Activated CD4-positive, alpha-beta T cell treated with anti-CD3 and anti-CD28 coated beads for 36 hours (primary cell): ENCODE measurements at regions of chr17 and their contacts with region 1.

Region 1: GRCh38 chr17:80892019-80892855 is 99.4 kb upstream of the CHMP6 start:
- DNase-seq: peak; percentile 94
- ATAC-seq: peak; percentile 78
- H3K4me3 Mint-ChIP-seq: peak overlapping the region; percentile 72
- H3K27ac Mint-ChIP-seq: peak overlapping the region; percentile 97
- H3K4me1 Mint-ChIP-seq: peaks cover 73% of the 10 kb centered on the region
- H3K27me3 Mint-ChIP-seq: no peaks in the 10 kb centered on the region

Region 2: DNA sequence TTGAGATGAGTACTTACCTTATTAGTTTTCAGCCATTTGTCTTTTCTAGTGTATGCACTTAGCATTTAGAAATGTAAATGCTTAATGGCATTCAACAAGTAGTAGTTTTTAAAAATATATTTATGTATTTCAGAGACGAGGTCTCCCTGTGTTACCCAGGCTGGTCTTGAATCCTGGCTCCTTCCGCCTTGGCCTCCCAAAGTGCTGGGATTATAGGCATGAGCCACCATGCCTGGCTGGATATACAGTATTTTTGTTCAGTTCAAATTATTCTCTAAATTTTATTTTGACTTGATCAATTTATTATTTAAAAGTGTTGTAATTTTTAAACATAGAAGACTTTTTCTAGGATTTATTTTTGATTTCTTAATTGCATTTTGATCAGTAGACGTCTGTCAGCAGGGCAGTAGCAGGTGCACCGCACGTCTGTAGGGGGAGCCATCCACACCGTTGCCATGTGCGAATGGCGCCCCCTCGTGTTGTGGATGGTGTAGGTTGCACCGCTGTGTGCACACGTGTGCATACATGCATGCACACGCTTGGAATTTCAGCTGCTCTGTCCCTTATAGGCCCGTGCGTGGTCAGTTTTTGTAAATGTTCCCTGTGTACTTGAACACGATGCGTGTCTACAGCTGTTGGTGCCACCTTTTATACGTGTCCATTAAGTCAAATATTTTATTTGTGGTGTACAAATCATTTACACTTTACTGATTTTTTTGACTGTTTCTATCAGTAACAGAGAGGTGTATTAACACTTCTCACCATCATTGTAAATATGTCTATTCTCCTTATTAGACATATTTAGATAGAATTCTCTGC is 317.0 kb before region 1 on chr17:
- CTCF ChIA-PET with region 1: interaction called, 3 read pairs
- POLR2A ChIA-PET with region 1: no interaction called
- intact Hi-C with region 1: loop called in 1 of 2 experiments (anchors 10 kb)
- DNase-seq: peak; percentile 97
- ATAC-seq: peak; percentile 100
- H3K4me3 Mint-ChIP-seq: no peak overlapping the region
- H3K27ac Mint-ChIP-seq: no peak overlapping the region
- H3K4me1 Mint-ChIP-seq: peaks cover 9% of the 10 kb centered on the region
- H3K27me3 Mint-ChIP-seq: no peaks in the 10 kb centered on the region

Region 3: DNA sequence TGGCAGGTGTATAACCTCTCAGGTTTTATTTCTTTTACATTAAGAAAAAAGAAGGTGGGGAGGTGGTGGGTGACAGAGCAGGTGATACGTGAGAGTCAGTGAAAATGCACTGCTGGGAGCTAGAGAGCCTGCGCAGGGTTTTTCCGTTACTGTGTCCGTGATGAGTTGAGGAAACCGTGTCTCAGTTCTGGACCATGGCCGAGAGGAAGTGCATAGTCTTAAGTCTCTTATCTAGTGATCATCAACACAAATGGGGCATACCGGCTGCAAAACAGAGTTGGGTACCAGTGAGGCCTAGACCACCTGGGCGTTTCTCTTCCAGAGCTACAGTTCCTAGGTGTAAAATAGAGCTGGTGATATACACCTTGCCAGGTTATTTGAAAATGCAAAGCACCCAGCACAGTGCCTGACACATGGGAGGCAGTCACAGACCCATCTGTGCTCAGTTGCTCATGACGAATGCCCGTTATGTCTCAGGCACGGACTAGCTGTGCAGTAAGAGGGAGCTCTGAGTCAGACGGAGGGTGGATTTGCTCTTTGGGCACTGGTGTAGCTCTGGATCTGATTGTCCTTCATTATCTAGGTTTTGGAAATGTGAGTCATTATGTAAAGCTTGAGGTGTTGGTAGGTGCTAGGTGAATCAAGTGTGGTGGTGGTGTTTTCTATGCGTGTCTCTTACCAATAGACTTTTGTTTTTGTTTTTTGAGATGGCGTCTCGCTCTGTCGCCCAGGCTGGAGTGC is 286.7 kb before region 1 on chr17:
- CTCF ChIA-PET with region 1: interaction called, 4 read pairs
- POLR2A ChIA-PET with region 1: interaction called, 5 read pairs
- intact Hi-C with region 1: loop called (anchors 1 to 10 kb)
- DNase-seq: peak; percentile 89
- ATAC-seq: peak; percentile 100
- H3K4me3 Mint-ChIP-seq: peak overlapping the region; percentile 37
- H3K27ac Mint-ChIP-seq: peak overlapping the region; percentile 92
- H3K4me1 Mint-ChIP-seq: peaks cover 75% of the 10 kb centered on the region
- H3K27me3 Mint-ChIP-seq: no peaks in the 10 kb centered on the region

Region 4: GRCh38 chr17:80761110-80761871 is 130.9 kb before region 1 on chr17:
- CTCF ChIA-PET with region 1: interaction called, 3 read pairs
- POLR2A ChIA-PET with region 1: no interaction called
- intact Hi-C with region 1: loop called (anchors 1 kb)
- DNase-seq: peak; percentile 86
- ATAC-seq: peak; percentile 82
- H3K4me3 Mint-ChIP-seq: peak overlapping the region; percentile 60
- H3K27ac Mint-ChIP-seq: peak overlapping the region; percentile 98
- H3K4me1 Mint-ChIP-seq: peaks cover 77% of the 10 kb centered on the region
- H3K27me3 Mint-ChIP-seq: no peaks in the 10 kb centered on the region

Region 5: DNA sequence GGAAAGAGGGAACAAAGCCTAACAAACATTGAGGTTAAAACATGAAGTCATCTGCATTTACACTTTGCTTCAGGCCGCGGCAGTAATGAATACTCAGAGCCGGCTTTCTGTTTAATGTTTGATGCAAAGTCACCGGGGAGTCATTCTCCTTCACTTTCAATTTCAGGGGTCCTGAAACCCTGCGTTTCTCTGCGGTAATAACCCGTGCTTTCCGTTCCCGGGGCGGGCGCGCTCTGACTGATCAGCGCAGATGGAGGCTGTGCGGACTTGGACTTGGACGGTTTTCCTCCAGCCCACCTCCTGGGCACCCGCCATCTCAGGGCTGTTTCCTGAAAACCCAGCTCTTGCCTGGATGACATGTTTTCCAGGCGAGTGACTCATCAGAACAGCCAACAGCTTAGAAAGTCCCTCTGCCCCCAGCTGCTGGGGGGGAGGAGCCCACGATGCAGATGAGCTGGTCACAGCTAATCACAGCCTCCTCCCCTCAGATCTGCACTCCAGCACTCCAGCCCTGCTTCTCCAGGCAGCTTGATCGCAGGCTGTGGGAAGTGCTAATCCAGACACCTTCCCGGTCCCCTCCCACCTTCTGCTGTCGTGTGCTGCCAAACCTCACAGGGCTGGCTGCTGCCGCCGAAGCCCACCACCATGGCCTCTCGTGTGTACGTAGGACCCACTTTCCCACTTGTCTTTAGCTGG is 59.2 kb before region 1 on chr17:
- CTCF ChIA-PET with region 1: interaction called, 4 read pairs
- POLR2A ChIA-PET with region 1: no interaction called
- intact Hi-C with region 1: loop called (anchors 1 kb)
- DNase-seq: peak; percentile 92
- ATAC-seq: peak; percentile 90
- H3K4me3 Mint-ChIP-seq: peak overlapping the region; percentile 70
- H3K27ac Mint-ChIP-seq: peak overlapping the region; percentile 95
- H3K4me1 Mint-ChIP-seq: peaks cover 44% of the 10 kb centered on the region
- H3K27me3 Mint-ChIP-seq: no peaks in the 10 kb centered on the region

Region 6: DNA sequence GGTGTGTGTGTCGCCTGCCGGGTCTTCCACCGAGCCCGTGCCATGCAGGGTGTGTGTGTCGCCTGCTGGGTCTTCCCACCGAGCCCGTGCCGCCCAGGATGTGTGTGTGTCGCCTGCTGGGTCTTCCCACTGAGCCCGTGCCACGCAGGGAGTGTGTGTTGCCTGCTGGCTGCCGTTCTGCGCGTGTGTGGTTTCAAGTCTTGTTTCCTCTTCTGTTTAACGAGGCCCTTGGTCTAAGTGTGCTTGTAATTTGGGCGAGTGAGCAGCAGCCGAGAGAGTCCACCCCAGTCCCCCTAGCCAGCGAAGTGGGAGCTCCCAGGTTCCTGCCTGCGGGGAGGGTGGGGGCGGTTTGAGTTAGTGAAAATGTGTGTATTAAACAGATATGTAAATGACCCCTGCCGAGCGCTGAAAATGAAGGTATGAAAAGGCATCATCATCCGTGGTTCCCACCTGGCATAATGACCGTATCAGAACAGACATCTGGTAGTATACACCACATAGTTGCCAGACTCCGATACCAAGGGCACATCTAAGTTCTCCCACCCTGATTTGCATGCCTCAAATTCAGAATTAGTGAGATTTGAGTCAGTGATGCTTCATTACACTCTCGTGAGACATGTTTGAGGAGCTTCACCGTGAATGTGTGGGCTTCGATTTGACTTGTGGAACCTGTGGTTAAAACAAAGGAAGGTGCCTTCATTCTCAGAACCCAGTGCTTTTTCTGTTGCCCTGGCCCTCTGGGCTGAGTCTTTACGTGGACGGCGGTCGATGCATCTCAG is 15.1 kb before region 1 on chr17:
- CTCF ChIA-PET with region 1: interaction called, 4 read pairs
- POLR2A ChIA-PET with region 1: interaction called, 21 read pairs
- intact Hi-C with region 1: loop called (anchors 1 kb)
- DNase-seq: peak; percentile 84
- ATAC-seq: peak; percentile 93
- H3K4me3 Mint-ChIP-seq: peak overlapping the region; percentile 51
- H3K27ac Mint-ChIP-seq: peak overlapping the region; percentile 99
- H3K4me1 Mint-ChIP-seq: peaks cover 68% of the 10 kb centered on the region
- H3K27me3 Mint-ChIP-seq: no peaks in the 10 kb centered on the region